A673 (cell line): ENCODE measurements at regions of chr19 and their contacts with region 1.

Region 1: GRCh38 chr19:35995048-35995993 is at the start of gene SDHAF1:
- DNase-seq: peak; percentile 93
- H3K4me3 ChIP-seq: peak within 1 kb of the TSS; percentile 79
- H3K27ac ChIP-seq: peak within 1 kb of the TSS; percentile 78
- H3K4me1 ChIP-seq: peaks cover 8% of the 10 kb centered on the region
- H3K27me3 ChIP-seq: no peaks in the 10 kb centered on the region
- CTCF ChIP-seq: no peak
- total RNA-seq, gene SDHAF1: 8.9 and 11.0 TPM in 2 replicates

Region 2: GRCh38 chr19:35963514-35963913 is 31.8 kb before region 1 on chr19:
- CTCF ChIA-PET with region 1: no interaction called
- POLR2A ChIA-PET with region 1: no interaction called
- intact Hi-C with region 1: loop called (anchors 1 kb)
- DNase-seq: peak; percentile 63
- H3K4me3 ChIP-seq: no peak overlapping the region
- H3K27ac ChIP-seq: no peak overlapping the region
- H3K4me1 ChIP-seq: no peaks in the 10 kb centered on the region
- H3K27me3 ChIP-seq: no peaks in the 10 kb centered on the region
- CTCF ChIP-seq: no peak

Region 3: GRCh38 chr19:36108684-36109083 is 113.4 kb after region 1 on chr19:
- CTCF ChIA-PET with region 1: no interaction called
- POLR2A ChIA-PET with region 1: interaction called, 19 read pairs
- intact Hi-C with region 1: no loop called
- DNase-seq: no peak
- H3K4me3 ChIP-seq: no peak overlapping the region
- H3K27ac ChIP-seq: no peak overlapping the region
- H3K4me1 ChIP-seq: peaks cover 4% of the 10 kb centered on the region
- H3K27me3 ChIP-seq: no peaks in the 10 kb centered on the region
- CTCF ChIP-seq: no peak